ENCODE measurements at regions of chr3 and their contacts with region 1.

Region 1: GRCh38 chr3:37852097-37852496 is 9.6 kb upstream of the CTDSPL start:
- DNase-seq: no peak
- H3K4me3 ChIP-seq: no peak overlapping the region
- H3K27ac ChIP-seq: no peak overlapping the region
- H3K4me1 ChIP-seq: no peaks in the 10 kb centered on the region
- H3K27me3 ChIP-seq: no peaks in the 10 kb centered on the region
- CTCF ChIP-seq: no peak
- POLR2A ChIP-seq: no peak

Region 2: GRCh38 chr3:37435572-37435971 is 416.5 kb before region 1 on chr3:
- intact Hi-C with region 1: no loop called
- DNase-seq: no peak
- H3K4me3 ChIP-seq: no peak overlapping the region
- H3K27ac ChIP-seq: no peak overlapping the region
- H3K4me1 ChIP-seq: peaks cover 6% of the 10 kb centered on the region in 2 donors
- H3K27me3 ChIP-seq: no peaks in the 10 kb centered on the region
- CTCF ChIP-seq: no peak
- POLR2A ChIP-seq: no peak

Region 3: DNA sequence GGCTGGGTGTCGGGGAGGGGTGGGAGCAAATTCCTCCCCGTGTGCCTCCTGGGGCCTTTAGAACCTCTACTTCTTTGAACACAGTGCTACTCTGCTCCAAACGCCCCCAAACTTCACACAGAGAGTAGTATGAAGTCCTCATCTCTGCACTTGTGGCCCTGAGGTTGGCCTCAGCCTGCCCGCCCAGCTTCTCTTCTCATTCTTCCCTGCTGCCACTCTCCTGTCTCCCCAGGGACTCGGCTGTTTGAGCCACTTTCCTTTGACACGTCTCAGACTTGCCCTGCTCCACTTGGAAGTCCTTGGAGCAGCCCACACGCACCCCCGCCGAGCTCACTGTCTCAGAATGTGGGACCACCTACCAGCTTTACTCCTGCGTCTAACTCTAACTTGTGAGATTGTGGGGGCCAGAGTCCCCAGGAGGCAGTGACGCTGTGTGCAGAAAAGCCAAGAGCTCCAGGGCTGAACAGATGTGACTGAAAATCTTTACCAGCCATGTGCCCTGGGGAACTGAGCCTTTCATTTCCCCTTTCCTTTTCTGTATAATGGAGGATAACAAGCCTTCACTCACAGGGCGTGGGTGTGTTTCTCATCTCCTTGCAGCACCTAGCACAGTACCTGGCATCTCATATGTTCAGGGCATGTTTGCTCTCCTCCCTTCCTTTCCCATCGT is 224.0 kb before region 1 on chr3:
- intact Hi-C with region 1: no loop called
- DNase-seq: no peak
- H3K4me3 ChIP-seq: no peak overlapping the region
- H3K27ac ChIP-seq: peak overlapping the region in 1 of 3 donors; percentile 86
- H3K4me1 ChIP-seq: peaks cover 57% of the 10 kb centered on the region in 2 donors
- H3K27me3 ChIP-seq: no peaks in the 10 kb centered on the region
- CTCF ChIP-seq: no peak
- POLR2A ChIP-seq: no peak

Region 4: DNA sequence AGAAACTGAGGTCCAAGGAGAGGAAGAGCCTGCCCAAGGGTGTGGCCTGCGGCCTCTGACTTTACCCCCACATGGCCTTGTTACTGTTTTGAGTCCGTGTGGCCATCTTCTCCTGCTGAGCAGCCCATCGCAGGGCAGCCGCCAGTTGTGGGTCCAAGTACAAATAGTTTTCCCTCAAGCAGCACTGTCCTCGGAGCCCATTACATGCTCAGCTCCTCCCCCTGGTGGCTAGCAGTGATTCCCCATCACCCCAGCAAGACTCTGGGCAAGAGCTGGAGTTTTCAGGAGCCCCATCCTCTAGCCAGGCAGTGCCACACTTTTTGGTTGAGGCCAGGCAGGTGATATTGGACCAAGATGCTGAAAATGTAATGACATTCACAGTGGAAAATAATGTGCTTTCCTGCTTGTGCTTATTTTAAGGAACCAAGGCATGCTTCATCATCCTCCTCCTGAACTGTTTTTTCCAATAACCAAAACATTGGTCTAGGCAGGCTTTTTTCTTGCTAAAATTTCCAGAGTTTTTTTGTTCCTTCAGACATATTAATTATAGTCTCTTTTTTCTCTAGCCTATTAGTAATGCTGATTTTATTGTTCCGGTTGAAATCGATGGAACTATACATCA is 115.3 kb after region 1 on chr3:
- intact Hi-C with region 1: loop called (anchors 2 kb)
- DNase-seq: peak; percentile 64 to 68
- H3K4me3 ChIP-seq: no peak overlapping the region
- H3K27ac ChIP-seq: peak overlapping the region in 1 of 3 donors; percentile 2
- H3K4me1 ChIP-seq: peaks cover 0 to 7% of the 10 kb centered on the region in 2 donors
- H3K27me3 ChIP-seq: no peaks in the 10 kb centered on the region
- CTCF ChIP-seq: peak in 5 of 6 experiments; percentile 47 to 81 (median 69)
- POLR2A ChIP-seq: no peak

Region 5: DNA sequence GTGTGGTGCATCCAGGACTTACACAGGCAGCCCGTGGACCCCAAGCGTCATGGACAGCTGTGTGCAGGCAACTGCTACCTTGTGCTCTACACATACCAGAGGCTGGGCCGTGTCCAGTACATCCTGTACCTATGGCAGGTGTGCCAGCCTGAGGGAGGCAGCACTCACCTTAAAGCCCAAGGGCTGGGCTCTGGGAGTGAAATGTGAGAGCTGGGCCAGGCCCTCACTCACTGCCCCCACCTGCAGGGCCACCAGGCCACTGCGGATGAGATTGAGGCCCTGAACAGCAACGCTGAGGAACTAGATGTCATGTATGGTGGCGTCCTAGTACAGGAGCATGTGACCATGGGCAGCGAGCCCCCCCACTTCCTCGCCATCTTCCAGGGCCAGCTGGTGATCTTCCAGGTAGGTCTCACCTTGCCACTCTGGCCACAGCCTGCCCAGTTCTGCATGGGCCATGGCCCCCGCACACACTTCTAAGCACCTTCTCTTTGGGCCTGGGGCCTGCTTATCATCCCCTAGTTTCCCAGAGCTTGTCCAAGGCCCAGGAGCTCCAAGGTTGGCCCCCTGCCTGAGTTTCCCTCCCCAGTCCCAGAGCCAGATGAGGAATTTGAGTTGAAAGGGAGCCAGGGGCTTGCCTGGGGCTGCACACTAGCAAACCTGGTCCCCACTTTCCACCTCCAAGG is 149.5 kb after region 1 on chr3:
- intact Hi-C with region 1: loop called (anchors 2 kb)
- DNase-seq: no peak
- H3K4me3 ChIP-seq: no peak overlapping the region
- H3K27ac ChIP-seq: no peak overlapping the region
- H3K4me1 ChIP-seq: peaks cover 24 to 37% of the 10 kb centered on the region in 2 donors
- H3K27me3 ChIP-seq: no peaks in the 10 kb centered on the region
- CTCF ChIP-seq: no peak
- POLR2A ChIP-seq: no peak

Measured in thyroid gland (tissue), 4 donors.